Ascending aorta (tissue), 2 donors: ENCODE measurements at regions of chr11 and their contacts with region 1.

Region 1: GRCh38 chr11:727859-728748 is 19.2 kb upstream of the TALDO1 start:
- DNase-seq: peak; percentile 83 to 98
- H3K4me3 ChIP-seq: peak overlapping the region in 1 of 2 donors; percentile 3
- H3K27ac ChIP-seq: peak overlapping the region; percentile 93 to 95
- H3K4me1 ChIP-seq: peaks cover 17 to 34% of the 10 kb centered on the region in 2 donors
- H3K27me3 ChIP-seq: no peaks in the 10 kb centered on the region
- CTCF ChIP-seq: peak; percentile 98 to 99 (median 99)

Region 2: DNA sequence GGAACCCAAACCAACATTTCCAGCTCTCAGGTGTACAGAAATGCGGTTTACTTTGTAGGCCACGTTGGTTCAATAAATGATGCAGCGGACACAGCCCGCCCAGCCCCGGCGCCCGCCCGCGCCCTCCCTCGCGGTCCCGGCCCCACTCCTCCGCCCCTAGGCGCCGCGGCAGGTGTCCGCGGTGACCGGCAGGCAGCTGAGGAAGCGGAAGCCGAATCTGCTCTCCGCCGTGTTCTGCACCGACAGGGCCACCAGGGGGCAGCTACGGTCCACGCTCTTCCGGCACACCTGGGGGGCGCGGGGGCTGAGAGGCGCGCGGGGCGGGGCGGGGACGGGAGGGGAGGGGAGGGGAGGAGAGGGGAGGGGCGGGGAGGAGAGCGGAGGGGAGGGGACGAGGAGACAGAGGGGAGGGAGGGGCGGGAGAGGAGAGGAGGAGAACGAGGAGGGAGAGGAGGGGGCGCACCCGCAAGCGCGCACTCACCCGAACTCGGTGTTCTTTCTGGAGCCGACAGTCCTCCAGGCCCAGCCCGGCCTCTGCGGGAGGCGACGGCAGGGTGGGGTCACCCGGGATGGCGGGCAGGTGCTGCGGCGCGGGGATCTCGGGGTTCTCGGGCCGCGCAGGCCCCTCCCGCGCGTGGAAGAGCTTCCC is 173.2 kb before region 1 on chr11:
- intact Hi-C with region 1: loop called (anchors 2 kb)
- DNase-seq: no peak
- H3K4me3 ChIP-seq: peak overlapping the region; percentile 37 to 48
- H3K27ac ChIP-seq: no peak overlapping the region
- H3K4me1 ChIP-seq: peaks cover 11 to 12% of the 10 kb centered on the region in 2 donors
- H3K27me3 ChIP-seq: peaks cover 25% of the 10 kb centered on the region
- CTCF ChIP-seq: peak; percentile 45 to 71 (median 64)

Region 3: GRCh38 chr11:645536-645935 is 82.6 kb before region 1 on chr11:
- intact Hi-C with region 1: no loop called
- DNase-seq: no peak
- H3K4me3 ChIP-seq: no peak overlapping the region
- H3K27ac ChIP-seq: no peak overlapping the region
- H3K4me1 ChIP-seq: no peaks in the 10 kb centered on the region
- H3K27me3 ChIP-seq: no peaks in the 10 kb centered on the region
- CTCF ChIP-seq: no peak

Region 4: GRCh38 chr11:662689-663274 is 65.3 kb before region 1 on chr11:
- intact Hi-C with region 1: loop called (anchors 1 kb)
- DNase-seq: peak in 1 of 2 donors; percentile 78
- H3K4me3 ChIP-seq: no peak overlapping the region
- H3K27ac ChIP-seq: no peak overlapping the region
- H3K4me1 ChIP-seq: no peaks in the 10 kb centered on the region
- H3K27me3 ChIP-seq: no peaks in the 10 kb centered on the region
- CTCF ChIP-seq: peak; percentile 64 to 81 (median 69)

Region 5: GRCh38 chr11:706957-707816 is 20.9 kb before region 1 on chr11:
- intact Hi-C with region 1: loop called (anchors 1 kb)
- DNase-seq: peak in 1 of 2 donors; percentile 74
- H3K4me3 ChIP-seq: peak overlapping the region; percentile 67 to 72
- H3K27ac ChIP-seq: peak overlapping the region; percentile 90 to 96
- H3K4me1 ChIP-seq: peaks cover 0 to 34% of the 10 kb centered on the region in 2 donors
- H3K27me3 ChIP-seq: no peaks in the 10 kb centered on the region
- CTCF ChIP-seq: peak in 1 of 3 experiments; percentile 17

Region 6: DNA sequence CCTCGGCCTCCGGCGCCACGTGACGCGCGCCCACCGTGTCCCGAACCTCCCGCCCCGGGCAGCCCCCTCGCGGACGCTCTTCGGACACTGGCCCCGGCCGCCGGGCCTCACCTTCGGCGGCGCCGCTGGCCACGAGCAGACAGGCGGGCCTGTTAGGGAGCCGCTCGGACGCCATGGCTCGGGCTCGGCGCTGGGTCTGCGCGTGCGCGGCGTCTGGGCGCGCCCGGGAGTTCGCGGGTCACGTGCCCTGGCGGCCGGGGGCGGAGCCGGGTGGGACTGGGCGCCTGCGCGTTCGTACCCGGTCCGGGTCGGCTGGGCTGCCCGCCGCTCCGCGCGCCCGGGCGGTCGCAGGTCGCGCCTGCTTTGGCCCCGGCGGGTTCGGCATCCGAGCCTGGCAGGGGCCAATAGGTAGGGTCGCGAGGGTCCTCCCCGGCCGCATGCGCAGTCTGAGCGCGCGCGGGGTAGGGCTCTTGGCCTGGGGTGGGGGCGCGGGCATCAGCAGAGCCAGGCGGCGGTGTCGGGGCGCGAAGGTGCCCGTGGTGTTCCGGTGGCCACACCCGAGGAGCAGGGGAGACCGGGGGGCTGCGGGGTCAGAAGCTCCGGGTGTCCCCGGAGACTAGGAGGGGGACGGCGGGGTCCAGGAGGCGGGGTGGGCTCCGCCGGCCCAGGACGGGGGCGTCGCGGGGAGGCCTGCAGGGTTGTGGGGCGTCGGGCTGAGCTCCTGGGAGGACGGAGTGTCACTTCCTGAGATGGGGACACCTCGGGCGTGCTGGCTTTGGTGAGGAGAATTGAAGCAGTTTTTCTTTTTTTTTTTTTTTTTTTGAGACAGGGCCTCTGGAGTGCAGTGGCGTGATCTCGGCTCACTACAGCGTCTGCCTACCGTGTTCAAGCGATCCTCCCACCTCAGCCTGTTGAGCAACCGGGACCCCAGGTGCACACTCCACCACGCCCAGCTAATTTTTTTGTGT is 49.5 kb after region 1 on chr11 and contains the start of gene GATD1:
- intact Hi-C with region 1: loop called (anchors 2 kb)
- DNase-seq: peak; percentile 49 to 94
- H3K4me3 ChIP-seq: peak within 1 kb of the TSS; percentile 65 to 88
- H3K27ac ChIP-seq: peak within 1 kb of the TSS; percentile 56 to 75
- H3K4me1 ChIP-seq: peaks cover 8 to 23% of the 10 kb centered on the region in 2 donors
- H3K27me3 ChIP-seq: no peaks in the 10 kb centered on the region
- CTCF ChIP-seq: no peak
- total RNA-seq, gene GATD1: 12.2 TPM